Sciatic nerve (tissue), 2 donors: ENCODE measurements at regions of chr1 and their contacts with region 1.

Region 1: DNA sequence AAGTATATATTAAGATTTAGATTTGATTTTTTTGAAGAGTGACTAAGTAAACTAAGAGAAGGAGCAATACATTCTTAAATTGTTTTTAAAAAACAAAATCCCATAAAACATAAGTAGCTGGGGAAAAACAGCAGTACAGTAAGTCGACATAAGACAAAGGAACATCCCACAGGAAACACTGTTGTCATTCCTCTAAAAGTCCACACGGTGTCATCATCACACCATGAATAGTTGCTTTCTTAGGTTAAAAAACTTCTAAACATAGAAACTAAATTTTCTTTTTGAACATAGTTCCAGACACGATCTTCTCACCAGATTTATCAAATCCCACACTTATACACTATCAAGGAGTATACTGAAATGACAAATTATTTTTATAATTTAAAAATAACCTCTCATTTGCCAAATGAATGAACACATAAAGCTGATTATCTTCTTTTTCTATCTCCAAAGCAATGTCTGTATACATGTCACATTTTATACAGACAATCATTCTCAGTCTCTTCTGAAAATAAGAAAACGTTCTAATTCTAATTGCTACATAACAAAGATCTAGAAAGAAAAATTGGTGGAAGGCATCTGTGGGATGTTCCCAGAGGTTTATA is 15.8 kb downstream of the ODF2L start:
- DNase-seq: no peak
- ATAC-seq: peak; percentile 84

Region 2: GRCh38 chr1:86499987-86500593 is 119.7 kb after region 1 on chr1:
- intact Hi-C with region 1: loop called (anchors 5 kb)
- DNase-seq: no peak
- ATAC-seq: no peak